Heart left ventricle (tissue), 16 donors: ENCODE measurements at regions of chr18 and their contacts with region 1.

Region 1: GRCh38 chr18:36464126-36464651 is 166.7 kb downstream of the FHOD3 start:
- DNase-seq: peak in 2 of 5 donors; percentile 69 to 70
- ATAC-seq: peak; percentile 20 to 74 (median 55)
- H3K4me3 ChIP-seq: no peak overlapping the region
- H3K27ac ChIP-seq: peak overlapping the region; percentile 30 to 97 (median 83)
- H3K4me1 ChIP-seq: peaks cover 0 to 60% (median 29%) of the 10 kb centered on the region in 12 donors
- H3K27me3 ChIP-seq: no peaks in the 10 kb centered on the region
- CTCF ChIP-seq: no peak
- POLR2A ChIP-seq: no peak

Region 2: DNA sequence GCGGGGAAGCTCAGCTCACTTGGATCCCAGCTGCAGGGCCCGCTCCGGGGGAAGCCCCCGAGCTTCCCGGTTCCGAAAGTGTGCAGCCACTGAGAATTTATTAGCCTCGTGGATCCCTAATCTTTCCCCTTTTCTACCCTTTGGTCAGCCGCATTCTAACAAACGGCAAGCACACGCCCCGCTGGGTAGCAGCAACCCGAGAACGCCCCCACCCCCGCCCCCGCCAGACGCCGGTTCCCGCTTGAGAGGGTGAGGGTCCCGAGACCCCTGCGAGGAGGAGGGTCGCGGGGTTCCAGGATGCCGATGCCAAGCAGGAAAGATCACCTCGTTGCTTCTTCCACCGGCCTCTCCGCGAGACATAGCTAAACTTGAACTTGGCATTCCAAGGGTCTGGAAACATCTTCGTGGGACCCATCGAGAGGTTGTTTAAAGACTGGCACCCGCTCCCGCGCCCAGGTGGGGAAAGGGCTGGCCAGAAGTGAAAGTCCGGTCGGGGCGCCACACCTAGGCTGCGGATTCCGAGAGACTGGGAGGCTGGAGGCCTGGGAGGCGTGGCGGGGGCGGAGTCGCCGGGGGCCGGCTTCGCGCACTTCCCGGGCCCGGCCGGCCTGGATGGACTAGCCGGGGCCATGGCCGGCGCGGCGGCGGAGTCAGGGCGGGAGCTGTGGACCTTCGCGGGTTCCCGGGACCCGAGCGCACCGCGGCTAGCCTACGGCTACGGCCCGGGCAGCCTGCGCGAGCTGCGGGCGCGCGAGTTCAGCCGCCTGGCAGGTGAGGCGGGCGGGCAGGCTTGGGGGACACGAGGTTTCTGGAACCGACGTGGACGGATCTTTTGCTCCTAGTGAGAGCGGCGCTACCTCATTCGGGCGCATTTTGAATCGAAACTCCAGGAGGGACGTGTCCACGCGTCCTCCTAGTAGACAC is 277.0 kb before region 1 on chr18 and contains the start of gene MOCOS:
- intact Hi-C with region 1: loop called in 1 of 10 experiments (anchors 10 kb)
- DNase-seq: peak; percentile 79 to 87 (median 81)
- ATAC-seq: peak; percentile 75 to 97 (median 92)
- H3K4me3 ChIP-seq: peak within 1 kb of the TSS; percentile 41 to 96 (median 68)
- H3K27ac ChIP-seq: peak within 1 kb of the TSS in 3 of 12 donors; percentile 36 to 51 (median 46)
- H3K4me1 ChIP-seq: peaks cover 0 to 24% (median 4%) of the 10 kb centered on the region in 12 donors
- H3K27me3 ChIP-seq: peaks cover 0 to 12% (median 0%) of the 10 kb centered on the region in 9 donors
- CTCF ChIP-seq: no peak
- POLR2A ChIP-seq: no peak
- total RNA-seq, gene MOCOS: 0.07 to 1.0 (median 0.25) TPM

Region 3: DNA sequence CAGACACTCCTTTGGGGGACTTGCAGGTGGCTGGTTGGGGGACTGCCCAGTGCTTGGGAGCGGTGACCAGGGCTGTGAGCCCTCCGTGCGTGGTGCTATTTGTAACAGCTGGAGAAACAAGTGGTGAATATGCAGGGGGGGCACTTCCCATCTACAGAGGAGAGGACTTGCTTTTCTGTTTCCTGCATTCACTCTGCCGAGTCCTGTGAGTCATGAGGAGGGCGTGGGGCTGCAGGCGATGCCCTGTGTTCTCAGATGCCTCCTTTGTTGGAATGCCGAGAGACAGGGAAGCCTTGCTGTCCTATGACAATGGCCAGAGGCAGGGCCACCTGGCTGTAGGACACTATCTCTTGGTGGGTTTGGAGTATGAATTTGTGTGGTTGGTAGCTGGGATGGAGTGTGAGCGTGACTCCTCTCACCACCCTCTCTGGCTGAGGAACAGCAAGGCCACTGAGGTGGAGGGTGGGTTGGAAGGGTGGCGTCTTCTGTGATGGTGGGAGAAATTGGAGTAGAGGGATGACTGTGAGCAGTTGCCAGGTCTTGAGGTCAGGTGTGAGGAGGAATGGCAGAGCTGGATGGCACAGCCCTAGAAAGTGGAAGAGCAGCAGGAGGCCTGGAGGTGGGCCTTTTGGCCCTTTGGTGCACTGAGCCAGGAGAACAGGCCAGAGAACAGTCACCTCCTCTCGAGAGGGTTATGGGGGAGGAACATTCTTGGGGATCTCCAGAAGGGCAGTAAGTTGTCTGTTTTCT is 142.4 kb before region 1 on chr18:
- intact Hi-C with region 1: loop called in 2 of 10 experiments (anchors 5 to 10 kb)
- DNase-seq: no peak
- ATAC-seq: peak; percentile 1 to 54 (median 30)
- H3K4me3 ChIP-seq: no peak overlapping the region
- H3K27ac ChIP-seq: peak overlapping the region in 5 of 12 donors; percentile 8 to 83 (median 58)
- H3K4me1 ChIP-seq: peaks cover 0 to 62% (median 13%) of the 10 kb centered on the region in 12 donors
- H3K27me3 ChIP-seq: no peaks in the 10 kb centered on the region
- CTCF ChIP-seq: no peak
- POLR2A ChIP-seq: no peak

Region 4: GRCh38 chr18:36392164-36392978 is 71.8 kb before region 1 on chr18:
- intact Hi-C with region 1: loop called in 2 of 10 experiments (anchors 5 to 10 kb)
- DNase-seq: no peak
- ATAC-seq: peak in 1 of 4 donors; percentile 1
- H3K4me3 ChIP-seq: no peak overlapping the region
- H3K27ac ChIP-seq: peak overlapping the region; percentile 54 to 96 (median 86)
- H3K4me1 ChIP-seq: peaks cover 0 to 71% (median 23%) of the 10 kb centered on the region in 12 donors
- H3K27me3 ChIP-seq: no peaks in the 10 kb centered on the region
- CTCF ChIP-seq: no peak
- POLR2A ChIP-seq: no peak

Region 5: GRCh38 chr18:36419905-36420531 is 44.2 kb before region 1 on chr18:
- intact Hi-C with region 1: loop called in 2 of 10 experiments (anchors 5 kb)
- DNase-seq: no peak
- ATAC-seq: peak in 3 of 4 donors; percentile 15 to 31 (median 27)
- H3K4me3 ChIP-seq: no peak overlapping the region
- H3K27ac ChIP-seq: peak overlapping the region; percentile 10 to 89 (median 76)
- H3K4me1 ChIP-seq: peaks cover 0 to 81% (median 32%) of the 10 kb centered on the region in 12 donors
- H3K27me3 ChIP-seq: no peaks in the 10 kb centered on the region
- CTCF ChIP-seq: peak in 3 of 12 donors; percentile 4 to 16 (median 7)
- POLR2A ChIP-seq: no peak

Region 6: DNA sequence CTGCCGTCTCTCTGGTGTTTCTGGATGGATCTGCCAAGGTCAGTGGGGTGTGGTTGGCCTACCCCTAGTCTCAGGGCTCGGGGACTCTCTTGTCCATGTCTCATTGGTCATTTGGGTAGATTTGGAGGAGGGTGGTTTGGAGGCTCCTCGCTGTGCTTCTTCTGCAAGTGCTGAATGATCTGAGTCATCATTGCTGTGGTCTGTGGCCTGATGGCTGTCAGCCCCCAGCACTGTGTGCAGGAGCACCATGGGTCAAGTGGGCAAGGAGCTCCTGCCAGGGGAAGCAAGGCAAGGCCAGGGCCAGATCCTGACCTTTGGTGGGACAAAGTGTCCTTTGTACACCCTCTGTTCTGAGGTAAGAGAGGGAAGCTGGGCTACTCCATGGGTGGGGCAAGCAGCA is 55.2 kb after region 1 on chr18:
- intact Hi-C with region 1: no loop called
- DNase-seq: no peak
- ATAC-seq: peak in 3 of 4 donors; percentile 29 to 61 (median 33)
- H3K4me3 ChIP-seq: no peak overlapping the region
- H3K27ac ChIP-seq: peak overlapping the region in 8 of 12 donors; percentile 3 to 67 (median 41)
- H3K4me1 ChIP-seq: peaks cover 0 to 50% (median 18%) of the 10 kb centered on the region in 12 donors
- H3K27me3 ChIP-seq: no peaks in the 10 kb centered on the region
- CTCF ChIP-seq: no peak
- POLR2A ChIP-seq: no peak

Region 7: GRCh38 chr18:36628435-36629137 is 164.4 kb after region 1 on chr18:
- intact Hi-C with region 1: loop called in 1 of 10 experiments (anchors 5 kb)
- DNase-seq: no peak
- ATAC-seq: peak in 3 of 4 donors; percentile 7 to 42 (median 11)
- H3K4me3 ChIP-seq: no peak overlapping the region
- H3K27ac ChIP-seq: peak overlapping the region; percentile 45 to 93 (median 82)
- H3K4me1 ChIP-seq: peaks cover 0 to 82% (median 23%) of the 10 kb centered on the region in 12 donors
- H3K27me3 ChIP-seq: no peaks in the 10 kb centered on the region
- CTCF ChIP-seq: no peak
- POLR2A ChIP-seq: no peak